Left ventricle myocardium superior (tissue), 1 donor: ENCODE measurements at regions of chrX and their contacts with region 1.

Region 1: DNA sequence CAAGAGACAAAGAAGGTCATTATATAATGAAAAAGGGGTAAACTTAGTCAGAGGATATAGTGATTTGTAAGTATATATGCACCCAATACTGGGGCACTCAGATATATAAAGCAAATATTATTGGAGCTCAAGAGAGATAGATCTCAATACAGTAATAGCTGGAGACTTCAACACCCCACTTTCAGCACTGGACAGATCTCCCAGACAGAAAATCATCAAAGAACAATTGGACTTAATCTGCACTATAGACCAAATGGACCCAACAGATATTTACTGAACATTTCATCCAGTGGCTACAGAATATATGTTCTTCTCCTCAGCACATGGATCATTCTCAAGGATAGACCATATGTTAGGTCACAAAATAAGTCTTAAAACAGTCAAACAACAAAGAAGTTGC is 47.2 kb upstream of the RBMXL3 start:
- DNase-seq: no peak
- ATAC-seq: no peak

Region 2: GRCh38 chrX:114611018-114611619 is 530.9 kb before region 1 on chrX:
- intact Hi-C with region 1: loop called (anchors 5 kb)
- DNase-seq: no peak
- ATAC-seq: no peak

Region 3: GRCh38 chrX:115268421-115268820 is 126.4 kb after region 1 on chrX:
- intact Hi-C with region 1: no loop called
- DNase-seq: no peak
- ATAC-seq: no peak

Region 4: DNA sequence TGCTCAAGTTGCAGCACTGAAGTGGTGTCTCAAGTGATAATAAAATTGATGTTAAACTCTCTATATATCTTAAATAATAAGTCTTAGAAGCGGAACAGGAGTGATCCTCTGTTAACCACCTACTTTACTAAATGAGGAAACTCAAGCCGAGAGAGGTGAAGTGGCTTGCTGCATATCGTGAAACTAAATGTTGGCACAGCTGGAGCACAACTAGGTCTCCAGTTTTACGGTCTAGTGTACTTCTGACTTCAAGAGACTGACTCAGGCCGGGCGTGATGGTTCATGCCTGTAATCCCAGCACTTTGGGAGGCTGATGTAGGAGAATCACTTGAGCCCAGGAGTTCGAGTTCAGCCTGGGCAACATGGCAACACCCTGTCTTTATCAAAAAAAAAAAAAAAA is 383.4 kb after region 1 on chrX:
- intact Hi-C with region 1: no loop called
- DNase-seq: no peak
- ATAC-seq: no peak